ENCODE measurements at regions of chr19 and their contacts with region 1.

Region 1: DNA sequence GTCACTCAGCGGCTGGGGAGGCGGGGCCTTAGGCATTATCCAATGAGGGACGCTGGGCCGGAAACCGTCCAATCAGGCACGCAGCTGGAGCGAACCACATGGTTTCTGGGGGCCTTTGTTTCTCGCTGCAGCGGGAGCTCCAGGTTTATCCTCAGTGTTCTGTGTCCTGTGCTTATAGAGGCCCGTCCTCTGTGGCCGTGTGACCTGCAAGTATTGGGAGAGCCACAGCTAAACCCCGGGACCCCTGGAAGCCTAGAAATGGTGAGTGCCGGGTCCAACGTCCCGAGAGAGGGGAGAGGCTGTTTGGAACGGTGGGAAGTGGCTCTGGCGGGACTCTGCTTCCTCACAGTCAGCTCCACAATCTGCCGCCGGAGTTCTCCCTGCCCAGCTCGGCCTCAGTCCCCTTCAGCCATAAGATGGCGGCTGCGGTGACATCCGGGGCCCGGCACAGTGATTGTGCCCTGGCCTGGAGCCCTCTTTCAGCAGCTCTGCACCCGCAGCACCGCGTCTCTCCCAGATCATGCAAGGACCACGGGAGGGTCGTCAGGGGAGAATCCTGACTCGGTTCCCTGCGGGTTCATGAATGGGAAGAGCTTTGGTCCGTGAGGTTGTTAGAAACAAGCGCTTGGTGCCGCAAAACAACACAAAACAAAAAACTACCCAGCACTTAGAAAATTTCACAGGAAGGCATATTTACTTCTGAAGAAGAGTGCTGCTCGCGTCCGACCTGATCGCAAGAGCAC is at the start of gene ZNF253:
- DNase-seq: peak; percentile 94 to 98
- H3K4me3 ChIP-seq: peak within 1 kb of the TSS; percentile 79 to 93
- H3K27ac ChIP-seq: peak within 1 kb of the TSS; percentile 89 to 96
- H3K4me1 ChIP-seq: peaks cover 3 to 6% of the 10 kb centered on the region in 2 donors
- H3K27me3 ChIP-seq: no peaks in the 10 kb centered on the region
- CTCF ChIP-seq: no peak
- total RNA-seq, gene ZNF253: 1.8 TPM

Region 2: DNA sequence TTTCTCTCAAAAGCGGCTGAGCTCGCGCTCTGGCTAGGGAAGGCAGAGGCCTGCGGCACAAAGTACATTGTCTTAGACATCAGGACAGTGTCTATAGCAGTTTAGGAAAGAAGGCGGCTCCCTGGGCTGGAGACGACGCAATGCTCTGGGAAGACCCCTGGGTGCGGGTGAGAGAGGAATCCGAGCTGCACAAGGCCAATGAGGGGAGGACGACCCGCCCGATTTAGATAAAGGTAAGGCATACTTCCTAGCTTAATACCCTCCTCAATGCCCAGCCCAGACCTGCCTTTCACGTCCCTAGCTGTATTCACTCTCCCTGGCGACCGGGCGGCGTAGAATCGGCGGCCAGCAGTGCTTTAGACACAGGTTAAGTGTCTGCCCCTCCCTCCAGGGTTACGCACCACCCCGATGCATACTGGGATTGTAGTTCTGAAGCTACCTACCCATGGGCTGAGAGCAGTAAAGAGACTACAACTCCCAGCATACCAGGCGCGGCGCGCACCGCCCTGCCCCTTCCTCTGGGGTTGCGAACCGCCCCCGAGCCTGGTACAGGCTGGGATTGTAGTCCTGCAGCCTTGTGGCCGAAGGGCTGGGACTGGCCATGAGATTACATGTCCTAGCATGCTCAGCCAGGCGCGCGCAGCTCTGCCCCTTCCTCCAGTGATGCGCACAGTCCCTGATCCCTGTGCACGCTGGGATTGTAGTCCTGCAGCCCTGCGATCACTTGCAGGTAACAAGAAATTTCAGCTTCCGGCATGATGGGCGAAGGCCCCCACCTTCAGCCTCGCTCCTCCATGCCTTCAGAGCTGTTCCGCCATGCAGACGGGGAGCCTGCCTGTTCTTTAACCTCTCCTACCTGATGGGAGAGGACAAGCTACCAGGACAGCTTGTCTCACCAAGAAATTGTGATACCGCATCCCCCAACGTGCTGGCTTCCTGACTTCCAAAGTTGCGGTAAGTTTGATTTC is 89.6 kb before region 1 on chr19:
- intact Hi-C with region 1: loop called (anchors 2 kb)
- DNase-seq: peak; percentile 97 to 100
- H3K4me3 ChIP-seq: peak overlapping the region; percentile 71 to 82
- H3K27ac ChIP-seq: peak overlapping the region; percentile 50 to 56
- H3K4me1 ChIP-seq: peaks cover 5 to 11% of the 10 kb centered on the region in 2 donors
- H3K27me3 ChIP-seq: no peaks in the 10 kb centered on the region
- CTCF ChIP-seq: no peak

Region 3: DNA sequence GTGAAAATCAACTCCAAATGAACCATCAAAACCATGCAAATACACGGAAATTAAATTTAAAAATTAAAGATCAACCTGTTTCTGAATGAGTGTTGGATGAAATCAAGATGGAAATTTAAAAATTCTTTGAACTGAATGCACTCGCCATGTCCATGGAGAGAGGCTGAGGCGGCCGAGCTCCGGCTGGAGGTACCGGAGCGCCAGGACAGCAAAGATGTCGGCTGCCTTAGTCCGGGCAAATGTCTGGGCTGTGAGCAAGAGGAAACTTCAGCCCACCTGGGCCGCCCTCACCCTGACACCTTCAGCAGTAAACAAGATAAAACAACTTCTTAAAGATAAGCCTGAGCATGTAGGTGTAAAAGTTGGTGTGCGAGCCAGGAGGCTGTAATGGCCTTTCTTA is 39.0 kb before region 1 on chr19:
- intact Hi-C with region 1: no loop called
- DNase-seq: no peak
- H3K4me3 ChIP-seq: no peak overlapping the region
- H3K27ac ChIP-seq: no peak overlapping the region
- H3K4me1 ChIP-seq: no peaks in the 10 kb centered on the region
- H3K27me3 ChIP-seq: no peaks in the 10 kb centered on the region
- CTCF ChIP-seq: no peak

Region 4: DNA sequence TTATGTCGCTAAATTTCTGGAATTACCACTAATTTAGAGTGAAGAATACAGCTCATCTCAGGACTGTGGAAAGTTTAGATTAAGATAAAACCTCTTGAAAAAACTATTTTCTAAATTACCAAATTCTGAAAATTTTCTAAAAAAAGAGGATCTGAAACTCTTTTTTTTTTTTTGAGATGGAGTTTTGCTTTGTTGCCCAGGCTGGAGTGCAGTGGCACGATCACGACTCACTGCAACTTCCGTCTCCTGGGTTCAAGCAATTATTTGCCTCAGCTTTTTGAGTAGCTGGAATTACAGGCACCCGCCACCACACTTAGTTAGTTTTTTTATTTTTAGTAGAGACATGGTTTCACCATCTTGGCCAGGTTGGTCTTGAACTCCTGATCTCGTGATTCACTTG is 16.9 kb before region 1 on chr19:
- intact Hi-C with region 1: no loop called
- DNase-seq: no peak
- H3K4me3 ChIP-seq: no peak overlapping the region
- H3K27ac ChIP-seq: no peak overlapping the region
- H3K4me1 ChIP-seq: no peaks in the 10 kb centered on the region
- H3K27me3 ChIP-seq: no peaks in the 10 kb centered on the region
- CTCF ChIP-seq: no peak

Region 5: DNA sequence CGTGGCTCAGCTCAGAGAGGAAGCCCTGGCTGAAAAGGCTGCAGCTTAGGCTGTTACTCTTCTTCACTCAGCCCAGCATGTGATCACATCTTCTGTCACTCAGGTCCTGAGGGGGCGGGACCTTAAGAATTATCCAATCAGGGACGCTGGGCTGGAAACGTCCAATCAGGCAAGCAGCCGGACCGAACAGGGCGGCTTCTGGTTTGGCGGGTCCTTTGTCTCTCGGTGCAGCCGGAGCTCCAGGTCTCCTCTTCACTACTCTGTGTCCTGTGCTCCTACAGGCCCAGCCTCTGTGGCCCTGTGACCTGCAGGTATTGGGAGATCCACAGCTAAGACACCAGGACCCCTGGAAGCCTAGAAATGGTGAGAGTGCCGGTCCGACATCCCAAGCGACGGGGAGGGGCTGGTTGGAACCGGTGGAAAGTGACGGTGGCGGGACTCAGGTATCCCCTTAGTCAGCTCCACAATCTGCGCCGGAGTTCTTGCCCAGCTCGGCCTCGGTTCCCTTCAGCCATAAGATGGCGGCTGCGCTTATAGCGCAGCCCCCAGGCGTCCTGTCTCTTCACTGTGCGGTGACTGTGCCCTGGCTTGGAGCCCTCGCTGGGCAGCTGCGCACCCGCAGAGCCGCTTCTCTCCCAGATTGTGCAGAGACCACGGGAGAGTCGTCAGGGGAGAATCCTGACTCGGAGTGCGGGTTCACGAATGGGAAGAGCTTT is 35.0 kb after region 1 on chr19 and contains the start of gene ZNF93:
- intact Hi-C with region 1: loop called (anchors 2 kb)
- DNase-seq: peak; percentile 92 to 97
- H3K4me3 ChIP-seq: peak within 1 kb of the TSS; percentile 80 to 82
- H3K27ac ChIP-seq: peak within 1 kb of the TSS; percentile 68 to 77
- H3K4me1 ChIP-seq: peaks cover 0 to 2% of the 10 kb centered on the region in 2 donors
- H3K27me3 ChIP-seq: no peaks in the 10 kb centered on the region
- CTCF ChIP-seq: no peak
- total RNA-seq, gene ZNF93: 2.9 TPM

Region 6: GRCh38 chr19:20077791-20078463 is 212.0 kb after region 1 on chr19 and contains the start of gene ZNF90:
- intact Hi-C with region 1: loop called (anchors 2 kb)
- DNase-seq: peak; percentile 92 to 98
- H3K4me3 ChIP-seq: peak within 1 kb of the TSS; percentile 68 to 71
- H3K27ac ChIP-seq: peak within 1 kb of the TSS; percentile 6 to 54
- H3K4me1 ChIP-seq: peaks cover 0 to 3% of the 10 kb centered on the region in 2 donors
- H3K27me3 ChIP-seq: no peaks in the 10 kb centered on the region
- CTCF ChIP-seq: no peak
- total RNA-seq, gene ZNF90: not detected

Measured in ascending aorta (tissue), 2 donors.